Activated CD4-positive, alpha-beta memory T cell treated with anti-CD3 and anti-CD28 coated beads for 36 hours (primary cell): ENCODE measurements at regions of chr3 and their contacts with region 1.

Region 1: GRCh38 chr3:190513409-190514162 is at the start of gene IL1RAP:
- DNase-seq: peak; percentile 90
- H3K4me3 Mint-ChIP-seq: peak within 1 kb of the TSS; percentile 86
- H3K27ac Mint-ChIP-seq: peak within 1 kb of the TSS; percentile 64
- H3K4me1 Mint-ChIP-seq: peaks cover 33% of the 10 kb centered on the region
- H3K27me3 Mint-ChIP-seq: no peaks in the 10 kb centered on the region
- total RNA-seq, gene IL1RAP: 14.8 to 15.8 TPM

Region 2: DNA sequence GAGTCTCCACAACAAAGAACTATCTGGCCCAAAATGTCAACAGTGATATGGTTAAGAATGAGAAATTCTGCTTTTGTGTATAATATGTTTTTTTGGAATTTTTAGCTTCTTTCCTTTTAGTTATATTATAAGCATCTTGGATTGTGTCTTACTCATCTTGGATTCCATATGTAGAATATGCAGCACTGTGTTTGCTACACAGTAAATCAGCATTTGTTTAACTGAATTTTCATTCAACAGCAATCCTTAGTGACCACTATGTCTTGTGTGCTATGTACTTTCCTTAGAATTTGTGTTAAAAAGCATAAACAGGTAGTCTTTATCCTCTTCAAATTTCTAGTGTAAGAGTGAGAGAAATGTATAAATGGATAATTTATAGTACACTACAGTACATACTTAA is 45.7 kb before region 1 on chr3:
- CTCF ChIA-PET with region 1: no interaction called
- POLR2A ChIA-PET with region 1: no interaction called
- intact Hi-C with region 1: no loop called
- DNase-seq: no peak
- H3K4me3 Mint-ChIP-seq: no peak overlapping the region
- H3K27ac Mint-ChIP-seq: no peak overlapping the region
- H3K4me1 Mint-ChIP-seq: no peaks in the 10 kb centered on the region
- H3K27me3 Mint-ChIP-seq: peaks cover 24% of the 10 kb centered on the region

Region 3: DNA sequence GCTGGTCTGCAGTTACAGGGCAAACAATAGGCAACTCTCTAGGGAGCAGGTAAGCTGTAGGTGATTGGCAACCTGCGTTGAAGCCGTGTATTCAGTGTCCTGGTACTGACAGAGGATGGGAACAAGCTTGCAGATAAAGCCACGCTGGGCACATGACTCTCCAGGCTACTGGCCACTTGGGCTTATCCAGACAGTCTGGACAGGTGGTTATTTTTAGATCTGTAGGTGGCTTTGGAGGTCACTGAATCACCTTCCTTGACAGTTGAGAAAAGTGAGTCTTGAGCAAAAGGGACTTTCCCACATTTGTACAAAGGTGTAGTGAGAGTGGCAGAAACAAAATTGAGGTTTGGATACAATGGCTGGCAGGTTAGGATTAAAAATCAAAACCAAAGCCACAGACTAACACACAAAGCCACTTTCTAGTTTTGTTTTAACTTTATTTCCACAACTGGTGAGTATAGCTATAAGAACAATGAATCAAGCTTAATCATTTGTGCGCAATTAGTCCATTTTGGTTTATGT is 22.0 kb before region 1 on chr3:
- CTCF ChIA-PET with region 1: interaction called, 15 read pairs
- POLR2A ChIA-PET with region 1: interaction called, 4 read pairs
- intact Hi-C with region 1: loop called (anchors 1 kb)
- DNase-seq: peak; percentile 37
- H3K4me3 Mint-ChIP-seq: no peak overlapping the region
- H3K27ac Mint-ChIP-seq: no peak overlapping the region
- H3K4me1 Mint-ChIP-seq: peaks cover 17% of the 10 kb centered on the region
- H3K27me3 Mint-ChIP-seq: peaks cover 57% of the 10 kb centered on the region

Region 4: GRCh38 chr3:190585805-190586630 is 72.4 kb after region 1 on chr3:
- CTCF ChIA-PET with region 1: interaction called, 7 read pairs
- POLR2A ChIA-PET with region 1: interaction called, 5 read pairs
- intact Hi-C with region 1: loop called (anchors 1 kb)
- DNase-seq: peak; percentile 83
- H3K4me3 Mint-ChIP-seq: peak overlapping the region; percentile 64
- H3K27ac Mint-ChIP-seq: peak overlapping the region; percentile 95
- H3K4me1 Mint-ChIP-seq: peaks cover 27% of the 10 kb centered on the region
- H3K27me3 Mint-ChIP-seq: no peaks in the 10 kb centered on the region